A549 (cell line): ENCODE measurements at regions of chr17 and their contacts with region 1.

Region 1: DNA sequence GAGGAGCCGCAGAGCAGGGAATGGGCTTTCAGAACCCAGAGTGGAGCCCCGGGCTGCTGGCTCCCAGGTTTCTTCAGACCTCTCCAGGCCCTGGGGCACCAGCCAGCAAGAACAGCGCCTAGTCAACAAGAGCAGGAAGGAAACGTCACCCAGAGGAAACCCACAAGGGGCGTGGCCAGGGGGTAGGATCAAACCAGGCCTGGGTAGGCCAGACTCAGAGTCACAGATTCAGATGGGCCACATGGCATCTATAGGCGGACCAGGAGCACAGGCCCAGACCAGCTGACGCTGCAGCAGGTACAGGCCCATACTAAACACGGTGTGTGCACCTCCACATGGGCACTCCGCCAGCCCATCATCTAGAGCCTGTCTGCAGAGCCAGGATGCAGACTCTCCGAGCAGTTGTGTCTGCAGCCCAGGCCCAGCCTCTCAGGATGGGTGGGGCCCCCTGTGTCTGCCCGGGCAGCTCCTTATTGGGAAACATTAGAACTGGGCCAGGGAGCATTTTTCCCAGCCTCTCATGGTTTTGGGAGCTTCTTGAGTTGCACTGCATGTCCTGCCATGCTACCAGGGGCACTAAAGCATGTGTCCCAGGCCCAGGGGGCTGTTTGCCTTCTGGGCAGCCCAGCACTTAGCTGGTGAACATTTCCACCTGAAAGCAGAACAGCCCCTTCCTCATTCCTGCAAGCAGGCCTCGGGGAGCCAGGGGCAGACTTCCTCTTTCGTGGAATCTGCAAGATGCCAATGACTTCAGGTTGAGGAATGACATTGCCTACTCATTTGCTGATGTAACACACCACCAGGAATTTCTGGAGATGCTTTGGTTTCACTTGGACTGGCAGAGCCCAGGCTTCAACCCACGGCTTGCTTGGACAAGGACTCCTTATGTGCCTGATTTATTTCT is at the start of gene NLRP1:
- DNase-seq: peak in 1 of 2 experiments; percentile 31
- ATAC-seq: peak; percentile 21 to 49; a peak in 4 of 6 replicates
- H3K4me3 ChIP-seq: no peak within 1 kb of the TSS
- H3K27ac ChIP-seq: peak within 1 kb of the TSS in 1 of 2 experiments; percentile 55; a peak in 3 of 6 replicates
- H3K4me1 ChIP-seq: peaks cover 15% of the 10 kb centered on the region; the same call in 2 of the 3 replicates
- CTCF ChIP-seq: no peak
- EP300 ChIP-seq: no peak
- POLR2A ChIP-seq: no peak
- RAD21 ChIP-seq: no peak
- polyA plus RNA-seq, gene NLRP1: 1.1 and 1.2 TPM in 2 replicates

Region 2: DNA sequence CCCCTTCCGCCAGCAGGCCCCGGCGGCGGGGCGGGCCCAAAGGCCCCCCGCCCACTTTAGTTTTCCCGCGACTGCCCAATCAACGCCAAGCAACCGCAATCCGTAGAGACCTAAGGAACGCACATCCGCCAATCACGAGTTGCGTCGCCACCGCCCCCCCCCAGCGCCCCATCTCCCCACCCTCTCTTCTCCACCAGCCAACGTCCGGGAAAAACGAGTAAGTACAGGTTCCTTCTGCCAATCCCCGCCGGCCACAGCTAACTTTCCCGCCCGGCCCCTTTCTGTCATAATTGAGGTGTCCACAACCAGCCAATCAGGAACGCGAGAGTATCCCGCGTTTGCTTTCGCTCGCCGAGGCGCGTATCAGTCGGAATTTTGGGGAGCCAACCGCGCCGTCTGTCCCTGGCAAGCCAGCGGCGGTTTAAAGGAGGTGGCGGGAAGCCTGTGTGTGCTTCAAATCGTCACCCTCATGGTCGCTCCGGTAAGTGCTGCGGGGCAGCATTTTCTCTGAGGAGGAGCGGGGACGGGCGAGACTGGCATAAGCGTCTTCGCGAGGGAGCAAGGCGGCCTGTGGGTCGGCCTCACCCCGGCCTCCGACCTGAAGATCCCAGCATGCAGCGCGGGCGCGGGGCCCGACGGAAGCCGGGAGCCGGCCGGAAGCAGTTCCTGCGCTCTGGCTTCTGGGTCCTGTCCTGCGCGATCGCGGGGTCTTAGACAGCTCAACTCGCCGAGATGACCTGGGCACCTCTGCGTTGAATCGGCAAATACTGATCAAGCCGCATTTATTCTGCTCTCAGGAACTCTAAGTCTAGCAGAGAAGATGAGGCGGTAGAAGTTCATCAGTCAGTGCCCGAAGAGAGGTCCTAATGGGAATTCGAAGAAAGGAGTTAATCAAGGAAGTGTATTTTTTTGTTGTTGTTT is 98.2 kb before region 1 on chr17 and contains the start of gene MIS12:
- CTCF ChIA-PET with region 1: no interaction called
- POLR2A ChIA-PET with region 1: no interaction called
- DNase-seq: peak; percentile 100
- ATAC-seq: peak; percentile 97
- H3K4me3 ChIP-seq: peak within 1 kb of the TSS; percentile 93
- H3K27ac ChIP-seq: peak within 1 kb of the TSS; percentile 93 to 95
- H3K4me1 ChIP-seq: peaks cover 11% of the 10 kb centered on the region; the same call in 2 of the 3 replicates
- CTCF ChIP-seq: no peak
- EP300 ChIP-seq: no peak
- POLR2A ChIP-seq: peak; percentile 73
- RAD21 ChIP-seq: no peak
- polyA plus RNA-seq, gene MIS12: 36.6 and 38.2 TPM in 2 replicates

Region 3: GRCh38 chr17:5598457-5598856 is 13.8 kb after region 1 on chr17:
- CTCF ChIA-PET with region 1: interaction called, 14 read pairs
- POLR2A ChIA-PET with region 1: no interaction called
- DNase-seq: no peak
- ATAC-seq: no peak
- H3K4me3 ChIP-seq: no peak overlapping the region
- H3K27ac ChIP-seq: no peak overlapping the region
- H3K4me1 ChIP-seq: no peaks in the 10 kb centered on the region
- CTCF ChIP-seq: no peak
- EP300 ChIP-seq: no peak
- POLR2A ChIP-seq: no peak
- RAD21 ChIP-seq: no peak

Region 4: DNA sequence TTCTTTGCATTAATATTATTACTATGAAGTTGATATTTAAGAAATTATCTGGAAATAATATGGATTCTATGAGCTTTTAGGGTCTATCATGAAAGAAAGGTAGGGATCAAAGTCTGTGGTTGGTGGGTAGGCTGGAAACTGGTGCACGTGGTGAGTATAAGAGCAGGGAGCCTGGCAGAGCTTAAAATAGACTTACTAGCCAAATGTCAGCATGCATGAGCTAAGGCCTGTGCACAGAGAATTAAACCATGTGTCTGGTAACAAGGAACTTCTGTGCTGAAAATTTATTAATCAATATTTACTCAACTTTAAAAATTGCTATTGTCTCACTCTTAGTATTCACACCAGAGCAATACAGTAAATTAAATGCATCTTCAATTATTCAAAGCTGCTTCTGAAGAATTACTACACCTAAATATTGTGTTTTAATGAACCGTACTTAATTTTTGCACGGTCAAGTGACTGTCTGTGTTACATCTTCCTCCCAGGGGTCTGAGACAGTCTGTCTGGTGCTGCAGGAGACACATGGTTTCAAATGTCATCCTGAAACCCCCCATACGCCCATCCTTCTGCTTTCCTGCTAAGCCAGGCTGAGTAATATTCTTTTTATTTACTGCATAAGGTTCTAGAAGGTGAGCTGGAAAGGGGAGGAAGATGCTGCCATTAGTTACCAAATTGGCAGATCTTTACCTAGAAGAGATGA is 160.6 kb after region 1 on chr17:
- CTCF ChIA-PET with region 1: no interaction called
- POLR2A ChIA-PET with region 1: no interaction called
- DNase-seq: no peak
- ATAC-seq: no peak
- H3K4me3 ChIP-seq: no peak overlapping the region
- H3K27ac ChIP-seq: no peak overlapping the region
- H3K4me1 ChIP-seq: no peaks in the 10 kb centered on the region
- CTCF ChIP-seq: no peak
- EP300 ChIP-seq: no peak
- POLR2A ChIP-seq: no peak
- RAD21 ChIP-seq: no peak

Region 5: GRCh38 chr17:5877948-5878347 is 293.3 kb after region 1 on chr17:
- CTCF ChIA-PET with region 1: no interaction called
- POLR2A ChIA-PET with region 1: no interaction called
- DNase-seq: no peak
- ATAC-seq: no peak
- H3K4me3 ChIP-seq: no peak overlapping the region
- H3K27ac ChIP-seq: no peak overlapping the region
- H3K4me1 ChIP-seq: no peaks in the 10 kb centered on the region
- CTCF ChIP-seq: no peak
- EP300 ChIP-seq: no peak
- POLR2A ChIP-seq: no peak
- RAD21 ChIP-seq: no peak

Region 6: DNA sequence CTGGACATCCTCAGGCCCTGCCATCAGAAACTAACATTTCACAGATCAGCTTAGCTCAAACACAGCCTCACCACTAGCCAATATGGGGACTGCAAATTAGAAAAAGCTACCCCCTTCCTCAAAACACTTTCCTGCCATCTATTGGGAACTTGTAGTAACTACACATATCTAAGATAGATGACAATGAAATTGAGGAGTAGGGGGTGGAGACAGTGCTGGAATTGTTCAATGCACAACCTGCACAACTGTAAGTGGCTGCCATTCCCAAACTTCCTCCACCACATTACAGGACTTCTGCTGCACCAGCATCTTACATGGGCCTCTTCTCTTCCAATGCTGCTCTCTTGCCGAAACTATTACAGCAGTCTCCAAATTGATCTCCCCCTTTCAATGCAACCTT is 828.4 kb after region 1 on chr17:
- CTCF ChIA-PET with region 1: interaction called, 394 read pairs
- POLR2A ChIA-PET with region 1: no interaction called
- DNase-seq: peak; percentile 65 to 84
- ATAC-seq: peak; percentile 72 to 89
- H3K4me3 ChIP-seq: no peak overlapping the region
- H3K27ac ChIP-seq: no peak overlapping the region
- H3K4me1 ChIP-seq: no peaks in the 10 kb centered on the region
- CTCF ChIP-seq: peak; percentile 77
- EP300 ChIP-seq: no peak
- POLR2A ChIP-seq: no peak
- RAD21 ChIP-seq: peak; percentile 85 to 93

Region 7: GRCh38 chr17:6421700-6422604 is 837.3 kb after region 1 on chr17:
- CTCF ChIA-PET with region 1: interaction called, 394 read pairs
- POLR2A ChIA-PET with region 1: no interaction called
- DNase-seq: peak; percentile 84 to 95
- ATAC-seq: peak; percentile 86 to 93
- H3K4me3 ChIP-seq: no peak overlapping the region
- H3K27ac ChIP-seq: no peak overlapping the region
- H3K4me1 ChIP-seq: no peaks in the 10 kb centered on the region
- CTCF ChIP-seq: peak; percentile 90
- EP300 ChIP-seq: no peak
- POLR2A ChIP-seq: no peak
- RAD21 ChIP-seq: peak; percentile 99

Region 8: GRCh38 chr17:6435968-6436367 is 851.3 kb after region 1 on chr17:
- CTCF ChIA-PET with region 1: interaction called, 17 read pairs
- POLR2A ChIA-PET with region 1: no interaction called
- DNase-seq: peak; percentile 79 to 90
- ATAC-seq: peak; percentile 93 to 98
- H3K4me3 ChIP-seq: no peak overlapping the region
- H3K27ac ChIP-seq: no peak overlapping the region
- H3K4me1 ChIP-seq: no peaks in the 10 kb centered on the region
- CTCF ChIP-seq: peak; percentile 84
- EP300 ChIP-seq: no peak
- POLR2A ChIP-seq: no peak
- RAD21 ChIP-seq: peak; percentile 87 to 88